ENCODE measurements at regions of chr7 and their contacts with region 1.

Region 1: DNA sequence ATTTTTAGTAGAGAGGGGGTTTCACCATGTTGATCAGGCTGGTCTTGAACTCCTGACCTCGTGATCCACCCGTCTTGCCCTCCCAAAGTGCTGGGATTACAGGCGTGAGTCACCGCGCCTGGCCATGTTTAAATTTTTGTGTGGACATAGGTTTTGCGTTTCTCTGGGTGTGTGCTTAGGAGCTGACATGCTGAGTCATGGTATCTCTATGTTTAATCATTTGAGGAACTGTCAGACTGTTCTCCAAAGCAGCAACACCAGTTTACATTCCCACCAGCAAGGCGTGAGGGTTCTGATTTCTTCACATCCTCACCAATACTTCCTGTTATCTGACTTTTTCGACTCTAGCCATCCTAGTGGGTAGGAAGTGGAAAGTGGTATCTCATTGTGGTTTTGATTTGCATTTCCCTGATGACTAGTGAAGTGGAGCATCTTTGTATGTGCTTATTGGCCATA is 153.7 kb downstream of the DNAJB6 start:
- DNase-seq: peak; percentile 64
- H3K4me3 Mint-ChIP-seq: no peak overlapping the region
- H3K27ac Mint-ChIP-seq: peak overlapping the region; percentile 52
- H3K4me1 Mint-ChIP-seq: peaks cover 42% of the 10 kb centered on the region
- H3K27me3 Mint-ChIP-seq: peaks cover 22% of the 10 kb centered on the region

Region 2: GRCh38 chr7:157299613-157300368 is 190.7 kb before region 1 on chr7:
- CTCF ChIA-PET with region 1: no interaction called
- POLR2A ChIA-PET with region 1: no interaction called
- intact Hi-C with region 1: loop called (anchors 5 kb)
- DNase-seq: peak; percentile 44
- H3K4me3 Mint-ChIP-seq: no peak overlapping the region
- H3K27ac Mint-ChIP-seq: peak overlapping the region; percentile 68
- H3K4me1 Mint-ChIP-seq: peaks cover 39% of the 10 kb centered on the region
- H3K27me3 Mint-ChIP-seq: no peaks in the 10 kb centered on the region

Region 3: DNA sequence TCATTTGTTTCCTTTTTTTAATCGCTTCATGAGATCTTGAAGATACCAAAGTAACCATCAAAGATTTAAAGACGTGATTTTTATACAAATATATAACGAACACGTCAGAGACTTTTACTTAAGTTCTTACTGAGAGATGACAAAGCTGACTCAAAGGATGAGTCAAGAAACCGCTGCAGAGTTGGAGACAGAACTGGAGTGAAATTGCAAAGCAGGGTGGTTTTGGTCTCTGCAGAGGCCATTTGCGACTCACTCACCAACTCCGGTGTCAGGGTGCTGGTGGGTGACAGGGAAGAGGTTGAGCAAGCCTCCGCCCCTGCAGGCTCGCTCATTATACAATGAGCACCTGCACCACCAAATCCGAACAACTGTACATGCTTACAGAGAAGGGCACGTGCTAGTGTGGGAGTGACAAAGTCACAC is 78.5 kb before region 1 on chr7:
- CTCF ChIA-PET with region 1: no interaction called
- POLR2A ChIA-PET with region 1: interaction called, 3 read pairs
- intact Hi-C with region 1: loop called (anchors 2 kb)
- DNase-seq: peak; percentile 87
- H3K4me3 Mint-ChIP-seq: peak overlapping the region; percentile 44
- H3K27ac Mint-ChIP-seq: peak overlapping the region; percentile 85
- H3K4me1 Mint-ChIP-seq: peaks cover 22% of the 10 kb centered on the region
- H3K27me3 Mint-ChIP-seq: no peaks in the 10 kb centered on the region

Region 4: GRCh38 chr7:157502701-157503111 is 12.2 kb after region 1 on chr7:
- CTCF ChIA-PET with region 1: no interaction called
- POLR2A ChIA-PET with region 1: no interaction called
- intact Hi-C with region 1: loop called (anchors 1 kb)
- DNase-seq: peak; percentile 80
- H3K4me3 Mint-ChIP-seq: peak overlapping the region; percentile 59
- H3K27ac Mint-ChIP-seq: peak overlapping the region; percentile 38
- H3K4me1 Mint-ChIP-seq: peaks cover 26% of the 10 kb centered on the region
- H3K27me3 Mint-ChIP-seq: peaks cover 4% of the 10 kb centered on the region

Region 5: GRCh38 chr7:157568770-157569584 is 78.5 kb after region 1 on chr7:
- CTCF ChIA-PET with region 1: no interaction called
- POLR2A ChIA-PET with region 1: no interaction called
- intact Hi-C with region 1: loop called (anchors 2 kb)
- DNase-seq: peak; percentile 74
- H3K4me3 Mint-ChIP-seq: peak overlapping the region; percentile 85
- H3K27ac Mint-ChIP-seq: peak overlapping the region; percentile 55
- H3K4me1 Mint-ChIP-seq: peaks cover 40% of the 10 kb centered on the region
- H3K27me3 Mint-ChIP-seq: no peaks in the 10 kb centered on the region

Region 6: DNA sequence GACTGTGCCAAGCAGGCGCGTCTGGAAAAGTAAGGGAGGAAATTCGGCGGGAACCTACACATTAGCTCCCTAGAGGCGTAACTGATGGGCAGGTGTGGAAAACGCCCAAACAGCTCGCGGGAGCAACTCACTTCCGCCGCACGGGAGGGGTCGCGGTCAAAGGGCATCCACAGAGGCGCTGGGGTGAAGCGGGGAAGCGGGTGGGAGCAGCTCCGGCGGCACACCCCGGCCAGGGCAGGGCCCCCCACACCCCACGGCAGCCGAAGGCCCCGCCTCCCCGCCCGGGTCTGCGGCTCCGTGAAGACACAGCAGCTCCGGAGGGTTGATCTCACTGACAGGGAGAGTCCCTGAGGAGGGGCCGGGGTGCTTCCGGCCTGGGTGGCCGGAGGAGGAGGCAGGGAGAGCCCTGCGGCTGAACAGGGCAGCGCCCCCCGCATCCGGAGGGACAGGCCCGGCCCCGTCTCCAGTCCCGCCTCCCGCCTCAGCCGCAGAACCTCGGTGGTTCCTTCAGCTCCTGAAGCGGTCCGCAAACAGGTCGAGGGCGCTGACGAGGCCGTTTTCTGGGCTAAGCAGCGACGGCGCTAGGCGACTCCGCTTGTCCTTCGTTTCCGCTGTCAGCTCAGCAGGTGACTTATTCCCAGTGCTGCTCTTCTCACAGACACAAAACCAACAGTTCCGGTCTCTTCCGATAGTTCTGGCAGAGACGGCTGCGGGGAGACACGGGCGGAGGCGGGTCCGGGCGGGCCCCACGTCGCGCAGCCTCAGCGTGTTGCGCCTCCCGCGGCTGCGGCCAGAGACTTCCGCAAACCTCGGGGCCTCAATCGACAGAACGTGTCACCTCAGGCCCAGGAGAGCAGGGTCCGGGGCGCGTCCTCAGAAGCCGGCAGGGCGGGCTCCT is 122.4 kb after region 1 on chr7:
- CTCF ChIA-PET with region 1: no interaction called
- POLR2A ChIA-PET with region 1: no interaction called
- intact Hi-C with region 1: loop called (anchors 5 kb)
- DNase-seq: peak; percentile 80
- H3K4me3 Mint-ChIP-seq: peak overlapping the region; percentile 78
- H3K27ac Mint-ChIP-seq: peak overlapping the region; percentile 69
- H3K4me1 Mint-ChIP-seq: peaks cover 5% of the 10 kb centered on the region
- H3K27me3 Mint-ChIP-seq: no peaks in the 10 kb centered on the region

Region 7: DNA sequence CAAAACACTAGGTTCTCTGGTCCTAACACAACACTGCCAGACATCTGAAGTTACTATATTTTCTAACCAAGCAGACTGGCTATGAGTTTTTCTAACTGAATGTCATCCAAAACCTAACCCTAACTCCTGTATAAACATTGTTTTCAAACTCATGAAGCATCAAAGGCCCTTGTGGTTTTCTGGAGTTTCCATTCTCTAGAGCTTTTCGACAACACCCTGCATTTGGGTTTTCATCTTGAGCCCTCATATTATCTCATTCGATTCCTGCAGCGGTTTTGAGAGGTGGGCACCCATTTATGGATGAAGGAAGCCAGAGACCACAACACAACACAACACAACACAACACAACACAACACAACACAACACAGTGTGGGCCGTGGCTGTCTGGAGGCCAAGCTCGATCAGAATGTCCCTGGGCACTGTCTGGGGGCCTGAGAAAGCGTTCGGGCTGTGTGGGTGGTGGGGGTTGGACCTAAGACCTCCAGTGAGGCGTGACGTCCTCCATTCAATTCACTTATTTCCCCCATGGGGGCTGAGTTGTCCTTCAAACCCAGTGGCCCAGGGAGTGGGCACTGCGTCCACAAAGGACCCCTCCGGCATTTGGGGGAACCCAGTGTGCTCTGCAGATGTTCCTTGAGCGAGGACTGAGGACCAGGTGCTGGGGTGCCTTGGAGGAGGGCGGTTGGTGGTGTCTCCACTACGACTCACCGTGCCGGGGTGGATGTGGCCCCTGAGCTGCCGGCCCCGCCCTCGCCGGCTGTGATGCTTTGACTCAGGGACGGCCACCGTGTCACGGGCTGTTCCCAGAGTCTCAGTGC is 336.8 kb after region 1 on chr7:
- CTCF ChIA-PET with region 1: no interaction called
- POLR2A ChIA-PET with region 1: no interaction called
- intact Hi-C with region 1: loop called (anchors 5 kb)
- DNase-seq: peak; percentile 65
- H3K4me3 Mint-ChIP-seq: no peak overlapping the region
- H3K27ac Mint-ChIP-seq: peak overlapping the region; percentile 4
- H3K4me1 Mint-ChIP-seq: peaks cover 25% of the 10 kb centered on the region
- H3K27me3 Mint-ChIP-seq: no peaks in the 10 kb centered on the region

Measured in activated CD4-positive, alpha-beta memory T cell treated with anti-CD3 and anti-CD28 coated beads for 36 hours (primary cell).